ENCODE measurements at regions of chr11 and their contacts with region 1.

Region 1: DNA sequence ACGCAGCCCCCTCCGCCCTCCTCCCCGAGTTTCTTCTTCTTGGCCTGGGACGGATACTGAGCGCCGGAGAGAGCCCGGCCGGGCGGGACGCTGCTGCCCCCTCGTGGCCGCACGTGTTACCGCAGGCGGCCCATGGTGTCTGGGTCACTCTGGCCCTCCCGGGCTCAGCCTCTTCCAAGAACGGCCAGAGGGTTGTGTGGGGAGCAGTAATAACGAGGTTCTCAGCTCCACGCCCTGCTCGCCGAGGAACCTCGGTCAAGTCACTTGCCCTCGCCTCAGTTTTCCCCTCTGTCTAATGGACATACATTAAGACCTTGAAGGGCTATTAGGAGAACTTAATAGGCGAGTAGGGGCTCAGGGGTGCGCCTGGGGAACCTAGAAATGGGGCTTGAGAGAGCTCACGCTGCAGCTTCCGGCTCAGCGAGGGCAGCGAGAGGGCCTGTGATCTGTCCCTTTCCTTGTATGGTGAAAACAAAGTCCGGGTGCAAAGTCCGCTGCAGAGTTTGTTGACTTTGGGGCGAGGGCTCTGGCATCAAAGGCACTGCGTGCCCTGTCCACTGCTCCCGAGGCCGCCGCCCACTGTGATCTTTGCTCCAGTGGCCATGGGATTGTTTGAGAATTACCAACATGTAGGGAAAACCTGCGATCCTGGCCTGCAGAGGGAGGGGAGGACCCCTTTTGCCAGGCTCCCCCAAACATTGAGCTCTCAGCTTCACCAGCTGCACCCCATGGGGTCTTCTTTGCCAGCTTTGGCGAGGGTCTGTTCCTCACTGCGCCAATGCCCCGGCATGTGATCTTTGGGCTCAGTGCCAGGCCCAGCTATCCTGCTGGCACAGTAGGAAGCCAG is 14.4 kb upstream of the LRP5 start:
- DNase-seq: peak; percentile 79
- ATAC-seq: peak; percentile 99
- H3K4me3 Mint-ChIP-seq: no peak overlapping the region
- H3K27ac Mint-ChIP-seq: no peak overlapping the region
- H3K4me1 Mint-ChIP-seq: peaks cover 11% of the 10 kb centered on the region
- H3K27me3 Mint-ChIP-seq: peaks cover 7% of the 10 kb centered on the region

Region 2: GRCh38 chr11:68213555-68214174 is 84.4 kb before region 1 on chr11:
- CTCF ChIA-PET with region 1: interaction called, 10 read pairs
- POLR2A ChIA-PET with region 1: no interaction called
- DNase-seq: peak; percentile 80
- ATAC-seq: peak; percentile 58
- H3K4me3 Mint-ChIP-seq: peak overlapping the region; percentile 69
- H3K27ac Mint-ChIP-seq: peak overlapping the region; percentile 85
- H3K4me1 Mint-ChIP-seq: peaks cover 33% of the 10 kb centered on the region
- H3K27me3 Mint-ChIP-seq: peaks cover 24% of the 10 kb centered on the region

Region 3: DNA sequence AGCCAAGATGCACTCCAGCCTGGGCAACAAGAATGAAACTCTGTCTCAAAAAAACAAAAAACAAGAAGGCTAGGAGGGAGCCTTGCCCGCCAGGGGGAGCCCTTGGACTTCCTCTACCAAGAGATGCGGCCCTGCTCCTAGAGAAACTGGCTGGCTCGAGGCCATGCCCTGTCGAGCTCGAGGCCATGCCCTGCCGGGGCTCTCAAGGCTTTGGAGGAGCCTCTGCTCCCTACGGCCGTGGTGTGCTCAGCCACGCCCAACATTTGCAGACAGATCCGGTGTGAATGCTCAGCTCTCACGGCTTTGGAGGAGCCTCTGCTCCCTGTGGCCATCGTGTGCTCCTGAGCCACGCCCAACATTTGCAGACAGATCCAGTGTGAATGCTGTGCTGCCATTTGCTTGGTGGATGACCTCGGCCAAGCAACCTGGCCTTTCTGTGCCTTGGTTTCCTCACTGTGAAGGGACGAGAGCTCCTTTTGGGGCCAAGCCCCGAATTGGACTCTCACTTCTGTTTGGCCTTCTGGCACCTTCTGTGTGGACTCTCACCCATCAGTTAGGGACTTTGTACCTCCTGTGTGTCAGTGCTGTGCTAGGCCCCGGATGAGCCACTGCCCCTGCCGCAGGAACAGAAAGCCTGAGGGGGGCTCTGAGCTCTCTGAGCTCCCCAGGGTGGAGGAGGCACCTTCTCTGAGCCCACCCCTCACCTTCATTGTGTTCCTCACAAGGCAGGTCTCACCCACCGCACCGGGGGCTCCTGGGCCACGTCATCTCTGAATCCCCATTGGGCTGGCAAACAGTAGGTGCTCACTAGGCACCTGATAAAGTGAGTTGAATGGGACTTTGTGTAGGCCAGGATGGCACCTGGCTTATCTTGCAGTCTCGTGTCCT is 40.3 kb before region 1 on chr11:
- CTCF ChIA-PET with region 1: interaction called, 170 read pairs
- POLR2A ChIA-PET with region 1: interaction called, 4 read pairs
- DNase-seq: peak; percentile 97
- ATAC-seq: peak; percentile 93
- H3K4me3 Mint-ChIP-seq: no peak overlapping the region
- H3K27ac Mint-ChIP-seq: peak overlapping the region; percentile 78
- H3K4me1 Mint-ChIP-seq: peaks cover 9% of the 10 kb centered on the region
- H3K27me3 Mint-ChIP-seq: no peaks in the 10 kb centered on the region

Region 4: GRCh38 chr11:68271781-68272608 is 26.0 kb before region 1 on chr11 and contains the start of gene C11orf24:
- CTCF ChIA-PET with region 1: interaction called, 79 read pairs
- POLR2A ChIA-PET with region 1: interaction called, 8 read pairs
- DNase-seq: peak; percentile 95
- ATAC-seq: peak; percentile 92
- H3K4me3 Mint-ChIP-seq: peak within 1 kb of the TSS; percentile 93
- H3K27ac Mint-ChIP-seq: peak within 1 kb of the TSS; percentile 98
- H3K4me1 Mint-ChIP-seq: peaks cover 43% of the 10 kb centered on the region
- H3K27me3 Mint-ChIP-seq: no peaks in the 10 kb centered on the region
- total RNA-seq, gene C11orf24: 29.2 to 30.0 TPM

Region 5: DNA sequence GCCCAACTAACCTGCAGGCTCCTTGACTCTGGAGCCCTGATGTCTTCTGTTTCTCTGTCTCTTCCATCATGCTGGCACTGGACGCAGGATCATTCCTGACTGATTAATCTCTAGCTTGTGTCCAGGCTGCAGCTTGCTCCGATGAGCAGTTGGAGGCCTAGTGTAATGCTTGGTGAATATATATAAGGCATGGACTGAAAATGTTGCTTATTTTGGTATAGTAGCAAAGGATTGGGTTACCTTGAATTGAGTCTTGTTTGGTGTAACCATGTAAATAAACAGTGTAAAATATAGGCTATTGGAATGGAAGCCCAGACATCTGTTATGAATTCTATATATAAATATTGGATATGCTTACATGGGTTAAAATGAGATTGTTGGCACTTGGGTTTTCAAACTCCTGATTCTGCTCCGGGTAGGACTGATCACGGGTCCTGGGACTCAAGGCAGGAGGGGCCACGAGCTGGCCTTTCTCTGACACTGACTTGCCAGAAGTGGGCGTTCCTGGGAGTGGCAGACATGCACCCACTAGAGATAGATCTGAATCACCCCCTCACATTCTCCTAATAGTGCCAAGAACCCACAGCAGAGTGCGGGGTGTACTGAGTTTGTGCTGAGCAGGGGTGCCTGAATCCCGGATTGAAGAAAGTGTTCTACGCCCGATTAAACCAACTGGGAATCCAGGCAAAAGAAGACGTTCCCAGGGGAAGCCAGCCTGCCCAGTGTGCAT is 40.2 kb after region 1 on chr11:
- CTCF ChIA-PET with region 1: interaction called, 12 read pairs
- POLR2A ChIA-PET with region 1: no interaction called
- DNase-seq: no peak
- ATAC-seq: no peak
- H3K4me3 Mint-ChIP-seq: no peak overlapping the region
- H3K27ac Mint-ChIP-seq: peak overlapping the region; percentile 54
- H3K4me1 Mint-ChIP-seq: peaks cover 78% of the 10 kb centered on the region
- H3K27me3 Mint-ChIP-seq: no peaks in the 10 kb centered on the region